A673 (cell line): ENCODE measurements at regions of chr10 and their contacts with region 1.

Region 1: DNA sequence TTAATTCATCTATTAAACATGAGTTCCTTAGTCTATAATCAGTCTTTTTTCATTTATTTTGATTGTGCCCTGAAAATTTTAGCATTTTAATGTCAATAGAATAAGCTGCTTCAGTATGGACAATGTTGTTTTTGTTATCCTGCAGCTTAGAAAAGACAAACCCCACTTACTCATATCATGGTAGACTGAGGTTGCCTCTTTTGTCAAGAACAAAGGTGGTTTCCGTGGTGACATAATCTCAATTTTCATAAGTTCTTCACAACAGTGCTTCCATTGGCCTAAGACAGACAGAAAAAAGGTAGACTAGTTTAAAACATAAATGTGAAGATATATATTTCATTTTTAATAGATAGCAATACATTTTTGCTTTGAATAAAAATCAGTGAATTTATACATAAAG is 69.1 kb downstream of the RTKN2 start:
- DNase-seq: no peak
- H3K4me3 ChIP-seq: no peak overlapping the region
- H3K27ac ChIP-seq: no peak overlapping the region
- H3K4me1 ChIP-seq: peaks cover 51% of the 10 kb centered on the region
- H3K27me3 ChIP-seq: no peaks in the 10 kb centered on the region
- CTCF ChIP-seq: no peak

Region 2: GRCh38 chr10:61835069-61835945 is 364.3 kb before region 1 on chr10:
- CTCF ChIA-PET with region 1: no interaction called
- POLR2A ChIA-PET with region 1: no interaction called
- intact Hi-C with region 1: loop called (anchors 5 kb)
- DNase-seq: peak; percentile 80
- H3K4me3 ChIP-seq: peak overlapping the region; percentile 0
- H3K27ac ChIP-seq: peak overlapping the region; percentile 77
- H3K4me1 ChIP-seq: peaks cover 39% of the 10 kb centered on the region
- H3K27me3 ChIP-seq: no peaks in the 10 kb centered on the region
- CTCF ChIP-seq: peak; percentile 57

Region 3: DNA sequence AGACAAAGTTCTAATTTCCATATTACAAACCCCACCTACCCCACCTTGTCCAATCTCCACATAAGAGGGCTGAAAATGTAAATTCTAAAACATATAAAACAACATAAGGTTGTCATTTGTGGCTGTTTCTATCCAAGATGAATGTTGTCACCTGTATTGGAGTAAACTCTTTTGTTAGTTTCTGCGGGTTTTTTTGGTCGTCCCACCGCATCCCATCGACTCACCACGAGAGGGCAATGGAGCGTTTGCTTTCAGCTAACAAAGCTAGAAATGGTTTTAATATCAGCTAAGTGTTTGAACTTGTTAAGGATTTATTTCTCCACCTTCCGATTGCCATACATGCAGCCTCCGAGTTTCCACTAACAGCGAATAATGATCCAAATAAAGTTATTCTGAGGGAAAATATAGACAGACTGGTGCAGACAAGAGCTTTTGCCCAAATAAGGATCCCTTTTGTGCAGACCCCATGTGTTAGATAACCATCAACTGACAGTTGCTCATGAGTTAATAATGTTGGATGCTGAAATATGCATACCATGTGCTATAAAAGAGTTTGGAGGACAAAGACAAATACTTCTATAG is 160.9 kb before region 1 on chr10:
- CTCF ChIA-PET with region 1: no interaction called
- POLR2A ChIA-PET with region 1: no interaction called
- intact Hi-C with region 1: loop called (anchors 1 kb)
- DNase-seq: peak; percentile 93
- H3K4me3 ChIP-seq: peak overlapping the region; percentile 5
- H3K27ac ChIP-seq: peak overlapping the region; percentile 79
- H3K4me1 ChIP-seq: peaks cover 85% of the 10 kb centered on the region
- H3K27me3 ChIP-seq: no peaks in the 10 kb centered on the region
- CTCF ChIP-seq: peak; percentile 94

Region 4: DNA sequence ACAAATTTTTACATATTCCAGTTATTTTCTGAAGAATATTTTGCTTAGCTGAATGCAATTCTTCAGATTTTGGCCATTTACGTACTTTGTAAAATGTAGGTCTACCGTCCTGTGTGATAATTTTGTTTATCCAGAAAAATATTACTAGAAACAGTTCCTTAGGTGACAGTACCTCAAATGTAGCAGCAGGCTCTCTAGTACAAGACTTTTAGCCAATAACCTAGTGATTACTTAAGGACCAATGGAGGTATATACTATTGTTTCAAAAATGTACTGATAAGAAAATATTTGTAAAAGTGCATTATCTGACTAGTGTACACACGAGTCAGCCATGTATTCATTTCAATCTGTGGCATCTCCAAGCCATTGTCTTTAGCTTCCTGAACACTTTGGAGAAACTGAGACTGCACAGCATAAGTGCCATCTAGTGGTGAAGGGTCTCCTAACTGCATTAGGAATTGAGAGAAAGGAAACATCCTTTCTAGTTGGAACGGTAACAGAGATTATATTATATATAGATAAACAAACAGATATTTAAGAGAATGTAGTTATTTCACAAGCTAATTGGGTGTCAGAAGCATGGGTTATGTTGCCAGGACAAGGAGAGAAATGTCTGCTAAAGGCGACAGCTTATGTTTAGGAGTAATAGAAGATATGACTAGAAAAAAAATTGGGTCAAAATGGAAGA is 45.3 kb after region 1 on chr10:
- CTCF ChIA-PET with region 1: interaction called, 3 read pairs
- POLR2A ChIA-PET with region 1: no interaction called
- intact Hi-C with region 1: loop called (anchors 2 kb)
- DNase-seq: peak; percentile 91
- H3K4me3 ChIP-seq: peak overlapping the region; percentile 29
- H3K27ac ChIP-seq: peak overlapping the region; percentile 68
- H3K4me1 ChIP-seq: peaks cover 78% of the 10 kb centered on the region
- H3K27me3 ChIP-seq: no peaks in the 10 kb centered on the region
- CTCF ChIP-seq: peak; percentile 93